ENCODE measurements at regions of chr1 and their contacts with region 1.

Region 1: GRCh38 chr1:36300526-36300925 is 5.6 kb upstream of the SH3D21 start:
- DNase-seq: no peak
- H3K4me3 ChIP-seq: no peak overlapping the region
- H3K27ac ChIP-seq: peak overlapping the region; percentile 1
- H3K4me1 ChIP-seq: peaks cover 15% of the 10 kb centered on the region
- H3K27me3 ChIP-seq: no peaks in the 10 kb centered on the region
- CTCF ChIP-seq: no peak
- POLR2A ChIP-seq: no peak

Region 2: DNA sequence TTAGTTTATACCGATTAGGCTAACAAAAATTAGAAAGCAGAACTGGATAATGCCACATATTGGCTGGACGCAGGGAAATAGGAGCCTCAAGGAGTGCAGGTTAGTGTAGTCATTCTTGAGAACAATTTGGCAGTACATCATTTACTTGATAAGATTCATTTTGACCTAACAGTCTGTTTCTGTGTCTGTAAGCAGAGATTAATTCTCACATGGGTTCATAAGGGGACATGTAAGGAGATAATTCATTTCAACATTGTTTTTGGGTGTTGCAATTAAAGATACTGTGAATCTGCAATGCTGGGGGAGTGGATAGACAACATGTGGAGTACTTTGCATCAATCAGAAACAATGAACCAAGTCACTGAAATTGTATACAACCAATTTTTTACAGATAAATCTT is 337.6 kb before region 1 on chr1:
- CTCF ChIA-PET with region 1: no interaction called
- POLR2A ChIA-PET with region 1: no interaction called
- dilution Hi-C with region 1: no loop called
- intact Hi-C with region 1: no loop called
- DNase-seq: no peak
- H3K4me3 ChIP-seq: no peak overlapping the region
- H3K27ac ChIP-seq: no peak overlapping the region
- H3K4me1 ChIP-seq: no peaks in the 10 kb centered on the region
- H3K27me3 ChIP-seq: no peaks in the 10 kb centered on the region
- CTCF ChIP-seq: no peak
- POLR2A ChIP-seq: no peak

Region 3: GRCh38 chr1:35988237-35988636 is 312.3 kb before region 1 on chr1:
- CTCF ChIA-PET with region 1: no interaction called
- POLR2A ChIA-PET with region 1: no interaction called
- dilution Hi-C with region 1: no loop called
- intact Hi-C with region 1: no loop called
- DNase-seq: no peak
- H3K4me3 ChIP-seq: no peak overlapping the region
- H3K27ac ChIP-seq: no peak overlapping the region
- H3K4me1 ChIP-seq: no peaks in the 10 kb centered on the region
- H3K27me3 ChIP-seq: no peaks in the 10 kb centered on the region
- CTCF ChIP-seq: no peak
- POLR2A ChIP-seq: no peak

Region 4: DNA sequence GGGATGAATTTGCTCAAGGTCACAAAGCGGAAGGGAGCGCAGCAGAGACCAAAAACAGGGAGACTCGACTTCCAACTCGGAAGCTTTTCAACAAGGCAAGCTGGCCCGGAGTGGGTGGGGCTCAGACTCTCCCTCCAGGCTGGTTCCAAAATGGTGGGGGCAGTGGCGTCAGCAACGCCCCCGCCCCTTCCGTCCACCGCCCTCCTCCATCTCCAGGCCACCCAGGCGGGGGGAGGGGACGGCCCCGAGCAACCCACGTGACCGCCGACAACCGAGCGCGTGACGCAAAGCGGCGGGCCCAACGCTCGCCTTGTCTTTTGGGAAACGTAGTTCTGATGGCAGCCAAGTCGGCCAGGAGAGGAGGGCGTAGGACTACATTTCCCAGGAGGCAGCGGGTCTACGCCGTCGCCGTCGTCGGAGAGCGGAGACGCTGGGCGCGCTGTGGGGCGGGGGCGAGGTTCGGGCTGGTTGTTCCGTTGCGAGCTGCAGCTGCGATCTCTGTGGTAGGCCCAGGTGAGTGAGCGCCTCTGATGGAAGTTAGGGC is 76.5 kb before region 1 on chr1 and contains the start of gene THRAP3:
- CTCF ChIA-PET with region 1: interaction called, 11 read pairs
- POLR2A ChIA-PET with region 1: interaction called, 3 read pairs
- dilution Hi-C with region 1: no loop called
- intact Hi-C with region 1: no loop called
- DNase-seq: peak; percentile 100
- H3K4me3 ChIP-seq: peak within 1 kb of the TSS; percentile 74 to 99 (median 78)
- H3K27ac ChIP-seq: peak within 1 kb of the TSS; percentile 89
- H3K4me1 ChIP-seq: peaks cover 17% of the 10 kb centered on the region
- H3K27me3 ChIP-seq: no peaks in the 10 kb centered on the region
- CTCF ChIP-seq: no peak
- POLR2A ChIP-seq: peak; percentile 93
- total RNA-seq, gene THRAP3: 130 and 144 TPM in 2 replicates

Region 5: GRCh38 chr1:36279110-36279788 is 21.3 kb before region 1 on chr1:
- CTCF ChIA-PET with region 1: interaction called, 15 read pairs
- POLR2A ChIA-PET with region 1: no interaction called
- dilution Hi-C with region 1: no loop called
- intact Hi-C with region 1: no loop called
- DNase-seq: no peak
- H3K4me3 ChIP-seq: no peak overlapping the region
- H3K27ac ChIP-seq: no peak overlapping the region
- H3K4me1 ChIP-seq: no peaks in the 10 kb centered on the region
- H3K27me3 ChIP-seq: no peaks in the 10 kb centered on the region
- CTCF ChIP-seq: no peak
- POLR2A ChIP-seq: no peak

Region 6: DNA sequence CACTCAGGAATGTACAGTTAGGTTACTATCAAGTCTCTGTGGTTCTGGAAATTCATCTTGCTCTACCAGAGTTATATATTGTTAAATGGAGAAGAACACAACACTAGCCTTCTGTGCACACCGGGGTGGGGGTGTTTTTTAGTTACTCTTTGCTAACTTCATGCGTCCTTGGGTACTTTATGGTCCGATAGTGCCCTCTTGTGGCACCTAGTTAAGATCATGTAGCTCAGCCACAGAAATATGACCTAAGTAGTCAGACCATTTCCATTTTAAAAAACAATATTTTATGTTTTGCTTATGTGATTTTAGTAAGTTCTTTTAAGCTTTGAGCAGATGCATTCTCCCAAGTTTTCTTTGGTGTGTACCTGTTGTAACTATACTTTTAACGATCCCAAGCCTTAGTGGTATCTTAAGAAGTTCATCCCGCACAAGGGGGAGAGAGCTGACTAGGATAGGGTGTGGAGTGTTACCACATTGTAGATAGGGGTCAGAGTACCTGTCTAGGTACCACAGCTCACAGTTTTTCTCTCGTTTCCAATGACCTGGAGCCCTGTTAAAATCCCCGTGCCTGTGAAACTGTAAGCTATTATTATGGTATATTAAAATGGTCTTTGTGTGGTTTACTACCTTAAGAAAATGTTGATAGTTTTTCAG is 15.0 kb before region 1 on chr1:
- CTCF ChIA-PET with region 1: interaction called, 17 read pairs
- POLR2A ChIA-PET with region 1: no interaction called
- dilution Hi-C with region 1: no loop called
- intact Hi-C with region 1: no loop called
- DNase-seq: peak; percentile 79
- H3K4me3 ChIP-seq: no peak overlapping the region
- H3K27ac ChIP-seq: no peak overlapping the region
- H3K4me1 ChIP-seq: no peaks in the 10 kb centered on the region
- H3K27me3 ChIP-seq: no peaks in the 10 kb centered on the region
- CTCF ChIP-seq: peak; percentile 57 to 59
- POLR2A ChIP-seq: no peak

Region 7: DNA sequence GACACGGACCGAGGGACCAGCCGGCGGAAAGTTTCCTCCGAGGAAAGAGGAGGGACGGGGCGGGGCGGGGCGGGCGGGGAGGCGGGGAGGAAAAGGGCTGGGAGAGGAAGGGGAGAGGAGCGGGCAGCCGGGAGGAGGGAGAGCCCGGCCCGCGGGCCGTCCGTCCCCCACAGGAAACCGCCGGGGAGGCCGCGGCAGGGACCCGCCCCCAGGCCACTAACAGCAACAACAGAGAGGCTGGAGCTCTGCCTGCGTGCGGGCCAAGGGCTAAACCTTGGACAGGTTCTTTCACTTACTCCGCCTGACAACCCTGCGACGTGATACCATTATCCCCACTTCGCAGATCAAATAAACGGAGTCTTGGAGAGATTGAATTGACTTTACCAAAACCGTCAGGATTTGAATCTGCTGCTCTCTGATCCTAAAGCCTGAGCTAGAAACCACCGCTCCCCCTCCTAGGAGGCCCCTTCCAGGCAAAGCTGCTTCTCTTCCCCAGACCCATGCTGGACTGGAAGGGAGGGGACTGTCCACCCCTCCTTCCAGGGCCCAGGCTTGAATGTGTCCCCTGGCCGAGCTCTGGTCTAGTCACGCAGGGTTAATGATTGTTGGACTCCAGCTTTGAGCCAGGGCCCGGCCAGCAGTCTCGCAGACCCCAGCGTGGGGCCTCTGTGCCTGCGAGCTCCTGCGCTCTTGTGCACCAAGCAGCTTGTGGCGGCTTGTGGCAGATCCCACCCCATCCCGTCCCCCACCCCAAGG is 23.2 kb after region 1 on chr1 and contains the start of gene EVA1B:
- CTCF ChIA-PET with region 1: interaction called, 13 read pairs
- POLR2A ChIA-PET with region 1: no interaction called
- dilution Hi-C with region 1: no loop called
- intact Hi-C with region 1: no loop called
- DNase-seq: peak; percentile 90
- H3K4me3 ChIP-seq: peak within 1 kb of the TSS; percentile 61 to 85 (median 71)
- H3K27ac ChIP-seq: peak within 1 kb of the TSS; percentile 62
- H3K4me1 ChIP-seq: peaks cover 15% of the 10 kb centered on the region
- H3K27me3 ChIP-seq: no peaks in the 10 kb centered on the region
- CTCF ChIP-seq: no peak
- POLR2A ChIP-seq: no peak
- total RNA-seq, gene EVA1B: 63.2 and 64.7 TPM in 2 replicates